Heart left ventricle (tissue), 16 donors: ENCODE measurements at regions of chr2 and their contacts with region 1.

Region 1: DNA sequence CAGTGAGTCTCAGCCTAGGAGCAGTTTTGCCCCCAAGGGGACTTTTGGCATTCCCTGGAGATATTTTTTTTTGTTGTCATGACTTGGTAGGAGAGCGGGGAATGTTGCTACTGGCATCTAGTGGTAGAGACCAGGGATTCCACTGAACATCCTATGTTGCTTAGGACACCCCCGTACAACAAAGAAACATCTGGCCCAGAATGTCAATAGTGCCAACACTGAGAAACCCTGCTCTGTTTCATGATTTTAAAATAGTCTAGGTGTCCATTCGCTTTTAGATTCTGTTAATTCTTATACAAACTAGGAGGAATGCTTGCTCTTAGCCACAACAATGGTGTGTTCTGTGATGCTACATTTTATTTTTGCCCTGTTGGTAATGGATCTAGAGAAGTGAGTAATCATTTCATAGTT is 225.8 kb upstream of the SIX3 start:
- DNase-seq: peak in 1 of 5 donors; percentile 6
- ATAC-seq: peak in 3 of 4 donors; percentile 61 to 79 (median 69)
- H3K4me3 ChIP-seq: no peak overlapping the region
- H3K27ac ChIP-seq: no peak overlapping the region
- H3K4me1 ChIP-seq: peaks cover 0 to 9% (median 0%) of the 10 kb centered on the region in 12 donors
- H3K27me3 ChIP-seq: no peaks in the 10 kb centered on the region
- CTCF ChIP-seq: peak; percentile 17 to 59 (median 40)
- POLR2A ChIP-seq: no peak

Region 2: GRCh38 chr2:44392338-44392943 is 323.2 kb before region 1 on chr2:
- intact Hi-C with region 1: loop called in 1 of 10 experiments (anchors 10 kb)
- DNase-seq: peak in 3 of 5 donors; percentile 16 to 40 (median 36)
- ATAC-seq: no peak
- H3K4me3 ChIP-seq: no peak overlapping the region
- H3K27ac ChIP-seq: no peak overlapping the region
- H3K4me1 ChIP-seq: no peaks in the 10 kb centered on the region
- H3K27me3 ChIP-seq: no peaks in the 10 kb centered on the region
- CTCF ChIP-seq: peak in 11 of 12 donors; percentile 43 to 75 (median 58)
- POLR2A ChIP-seq: no peak

Region 3: GRCh38 chr2:44553456-44553855 is 162.2 kb before region 1 on chr2:
- intact Hi-C with region 1: loop called in 1 of 10 experiments (anchors 10 kb)
- DNase-seq: no peak
- ATAC-seq: no peak
- H3K4me3 ChIP-seq: no peak overlapping the region
- H3K27ac ChIP-seq: no peak overlapping the region
- H3K4me1 ChIP-seq: peaks cover 0 to 7% (median 0%) of the 10 kb centered on the region in 12 donors
- H3K27me3 ChIP-seq: no peaks in the 10 kb centered on the region
- CTCF ChIP-seq: no peak
- POLR2A ChIP-seq: no peak

Region 4: DNA sequence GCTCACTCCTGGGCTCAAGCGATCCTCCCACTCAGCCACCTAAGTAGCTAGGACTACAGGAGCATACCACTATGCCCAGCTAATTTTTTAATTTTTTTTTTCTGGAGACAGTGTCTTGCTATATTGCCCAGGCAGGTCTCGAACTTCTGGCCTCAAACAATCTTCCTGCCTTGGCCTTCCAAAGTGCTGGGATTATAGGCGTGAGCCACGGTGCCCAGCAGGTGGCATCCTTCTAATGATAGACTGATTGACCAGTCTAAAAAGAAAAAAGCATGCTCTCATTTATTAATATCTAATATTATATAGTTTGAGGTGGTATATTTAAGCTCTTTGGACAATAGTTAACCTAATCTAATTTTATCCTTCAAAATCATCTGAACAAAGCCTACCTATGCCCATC is 155.3 kb before region 1 on chr2:
- intact Hi-C with region 1: loop called in 2 of 10 experiments (anchors 10 kb)
- DNase-seq: peak in 1 of 5 donors; percentile 29
- ATAC-seq: no peak
- H3K4me3 ChIP-seq: no peak overlapping the region
- H3K27ac ChIP-seq: no peak overlapping the region
- H3K4me1 ChIP-seq: no peaks in the 10 kb centered on the region
- H3K27me3 ChIP-seq: no peaks in the 10 kb centered on the region
- CTCF ChIP-seq: peak in 11 of 12 donors; percentile 9 to 49 (median 26)
- POLR2A ChIP-seq: no peak

Region 5: GRCh38 chr2:44955593-44956392 is 240.1 kb after region 1 on chr2:
- intact Hi-C with region 1: loop called in 2 of 10 experiments (anchors 5 to 10 kb)
- DNase-seq: peak; percentile 63 to 88 (median 72)
- ATAC-seq: peak; percentile 74 to 88 (median 82)
- H3K4me3 ChIP-seq: peak overlapping the region; percentile 0 to 47 (median 31)
- H3K27ac ChIP-seq: no peak overlapping the region
- H3K4me1 ChIP-seq: peaks cover 0 to 35% (median 28%) of the 10 kb centered on the region in 12 donors
- H3K27me3 ChIP-seq: peaks cover 27 to 86% (median 59%) of the 10 kb centered on the region in 9 donors
- CTCF ChIP-seq: peak; percentile 76 to 94 (median 88)
- POLR2A ChIP-seq: no peak